Endothelial cell of umbilical vein (primary cell): ENCODE measurements at regions of chr10 and their contacts with region 1.

Region 1: GRCh38 chr10:48306265-48306869 is at the start of gene MAPK8:
- DNase-seq: peak; percentile 85
- H3K4me3 ChIP-seq: peak within 1 kb of the TSS; percentile 64 to 97 (median 80)
- H3K27ac ChIP-seq: peak within 1 kb of the TSS; percentile 76
- H3K4me1 ChIP-seq: peaks cover 29% of the 10 kb centered on the region
- H3K27me3 ChIP-seq: peaks cover 6% of the 10 kb centered on the region in 2 experiments
- CTCF ChIP-seq: no peak
- POLR2A ChIP-seq: peak; percentile 85
- total RNA-seq, gene MAPK8: 50.1 and 56.2 TPM in 2 replicates

Region 2: DNA sequence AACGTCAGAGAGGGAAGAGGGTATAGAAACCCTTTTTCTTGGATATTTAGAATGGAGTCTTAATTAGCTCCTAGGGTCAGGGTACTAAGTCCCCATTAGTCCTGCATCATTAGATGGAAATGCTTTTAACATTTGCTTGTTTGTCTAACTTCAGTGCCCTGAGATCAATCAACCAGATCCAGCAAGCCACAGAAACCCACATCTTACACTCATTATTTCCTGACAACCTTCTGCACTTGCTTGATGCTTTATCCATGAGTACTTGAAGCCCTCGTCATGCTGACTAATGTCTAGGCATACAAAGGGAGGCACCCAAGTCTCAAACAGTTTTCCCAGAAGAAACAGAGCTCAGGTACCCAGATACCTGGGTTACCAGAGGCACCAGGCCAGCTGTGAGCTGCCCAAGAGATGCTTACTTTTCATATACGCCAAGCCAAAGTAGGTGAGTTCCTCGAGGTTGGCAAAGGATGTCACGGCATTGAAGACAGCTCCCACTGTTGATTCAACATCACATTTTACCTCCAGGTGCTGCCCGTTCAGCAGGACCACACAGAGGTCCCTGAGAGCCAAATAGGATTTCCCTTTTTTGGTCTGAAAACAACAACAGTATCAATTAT is 74.6 kb before region 1 on chr10:
- CTCF ChIA-PET with region 1: no interaction called
- POLR2A ChIA-PET with region 1: no interaction called
- dilution Hi-C with region 1: no loop called
- intact Hi-C with region 1: no loop called
- DNase-seq: no peak
- H3K4me3 ChIP-seq: no peak overlapping the region
- H3K27ac ChIP-seq: no peak overlapping the region
- H3K4me1 ChIP-seq: no peaks in the 10 kb centered on the region
- H3K27me3 ChIP-seq: peaks cover 6 to 20% of the 10 kb centered on the region in 2 experiments
- CTCF ChIP-seq: no peak
- POLR2A ChIP-seq: no peak

Region 3: DNA sequence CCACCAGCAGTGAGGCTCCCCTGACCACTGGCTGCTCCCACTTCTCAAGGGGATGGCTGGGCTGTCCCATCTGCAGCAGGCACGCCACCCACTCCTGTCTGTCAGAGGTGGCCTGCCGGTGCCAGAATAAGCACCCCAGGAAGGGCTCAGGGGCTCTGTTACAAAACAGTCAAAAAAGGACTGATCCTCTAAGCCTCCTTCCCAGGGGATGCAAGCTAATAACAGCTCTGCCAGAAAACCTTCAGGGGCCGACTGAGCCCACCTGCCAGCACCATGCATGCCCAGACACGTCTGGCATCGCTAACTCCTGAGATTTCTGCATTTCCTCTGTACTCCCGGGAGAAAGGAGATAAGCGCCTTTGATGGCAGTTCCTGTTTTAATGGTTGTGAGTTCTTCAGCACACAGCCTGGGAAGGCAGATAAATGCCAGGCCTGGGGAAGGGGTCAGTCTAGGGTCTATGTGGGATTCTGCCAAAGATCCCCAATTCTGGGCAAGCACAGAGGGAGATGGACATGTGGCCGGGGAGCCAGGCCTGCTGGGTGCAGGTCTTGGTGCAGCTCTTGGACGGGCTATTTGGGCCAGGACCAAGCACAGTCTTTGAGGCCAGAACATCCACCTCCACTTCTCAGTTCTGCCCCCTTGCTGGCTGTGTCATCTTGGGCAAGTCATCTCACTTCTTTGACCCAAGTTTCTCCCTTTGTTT is 170.1 kb after region 1 on chr10:
- CTCF ChIA-PET with region 1: no interaction called
- POLR2A ChIA-PET with region 1: no interaction called
- dilution Hi-C with region 1: no loop called
- intact Hi-C with region 1: loop called (anchors 1 kb)
- DNase-seq: peak; percentile 71
- H3K4me3 ChIP-seq: no peak overlapping the region
- H3K27ac ChIP-seq: no peak overlapping the region
- H3K4me1 ChIP-seq: peaks cover 20% of the 10 kb centered on the region
- H3K27me3 ChIP-seq: no peaks in the 10 kb centered on the region
- CTCF ChIP-seq: no peak
- POLR2A ChIP-seq: no peak

Region 4: DNA sequence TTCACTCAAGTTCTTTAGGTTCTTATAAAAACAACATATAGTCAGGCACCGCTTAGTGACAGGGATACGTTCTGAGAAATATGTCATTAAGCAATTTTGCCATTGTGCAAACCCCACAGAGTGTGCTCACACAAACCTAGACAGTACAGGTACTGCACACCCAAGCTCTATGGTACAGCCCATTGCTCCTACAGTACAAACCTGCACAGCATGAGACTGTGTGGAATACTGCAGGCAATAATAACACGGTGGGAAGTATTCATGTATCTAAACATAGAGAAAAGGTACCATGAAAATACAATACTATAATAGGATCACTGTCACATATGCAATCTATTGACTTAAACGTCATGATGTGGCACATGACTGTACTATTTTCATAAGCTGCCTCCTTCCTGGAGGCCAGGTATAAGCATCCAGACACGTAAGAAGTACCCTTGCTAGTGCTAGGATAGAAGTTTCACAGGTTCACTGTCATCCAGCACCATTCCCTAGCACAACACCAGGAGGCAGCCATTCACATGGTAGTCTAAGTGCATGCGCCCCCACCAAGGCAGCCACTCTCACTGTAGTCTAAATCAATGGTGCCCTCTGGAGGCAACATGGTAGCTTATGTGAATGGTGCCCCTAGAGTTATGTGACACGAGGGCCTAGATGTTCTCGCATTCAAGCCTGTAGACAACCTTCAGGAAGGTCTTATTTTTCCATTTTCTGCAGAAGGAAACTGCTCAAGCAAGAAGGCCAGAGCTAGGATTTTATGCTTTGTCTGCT is 200.0 kb after region 1 on chr10:
- CTCF ChIA-PET with region 1: interaction called, 3 read pairs
- POLR2A ChIA-PET with region 1: no interaction called
- dilution Hi-C with region 1: no loop called
- intact Hi-C with region 1: loop called (anchors 1 kb)
- DNase-seq: peak; percentile 67
- H3K4me3 ChIP-seq: no peak overlapping the region
- H3K27ac ChIP-seq: no peak overlapping the region
- H3K4me1 ChIP-seq: peaks cover 19% of the 10 kb centered on the region
- H3K27me3 ChIP-seq: no peaks in the 10 kb centered on the region
- CTCF ChIP-seq: peak; percentile 36 to 53
- POLR2A ChIP-seq: no peak

Region 5: DNA sequence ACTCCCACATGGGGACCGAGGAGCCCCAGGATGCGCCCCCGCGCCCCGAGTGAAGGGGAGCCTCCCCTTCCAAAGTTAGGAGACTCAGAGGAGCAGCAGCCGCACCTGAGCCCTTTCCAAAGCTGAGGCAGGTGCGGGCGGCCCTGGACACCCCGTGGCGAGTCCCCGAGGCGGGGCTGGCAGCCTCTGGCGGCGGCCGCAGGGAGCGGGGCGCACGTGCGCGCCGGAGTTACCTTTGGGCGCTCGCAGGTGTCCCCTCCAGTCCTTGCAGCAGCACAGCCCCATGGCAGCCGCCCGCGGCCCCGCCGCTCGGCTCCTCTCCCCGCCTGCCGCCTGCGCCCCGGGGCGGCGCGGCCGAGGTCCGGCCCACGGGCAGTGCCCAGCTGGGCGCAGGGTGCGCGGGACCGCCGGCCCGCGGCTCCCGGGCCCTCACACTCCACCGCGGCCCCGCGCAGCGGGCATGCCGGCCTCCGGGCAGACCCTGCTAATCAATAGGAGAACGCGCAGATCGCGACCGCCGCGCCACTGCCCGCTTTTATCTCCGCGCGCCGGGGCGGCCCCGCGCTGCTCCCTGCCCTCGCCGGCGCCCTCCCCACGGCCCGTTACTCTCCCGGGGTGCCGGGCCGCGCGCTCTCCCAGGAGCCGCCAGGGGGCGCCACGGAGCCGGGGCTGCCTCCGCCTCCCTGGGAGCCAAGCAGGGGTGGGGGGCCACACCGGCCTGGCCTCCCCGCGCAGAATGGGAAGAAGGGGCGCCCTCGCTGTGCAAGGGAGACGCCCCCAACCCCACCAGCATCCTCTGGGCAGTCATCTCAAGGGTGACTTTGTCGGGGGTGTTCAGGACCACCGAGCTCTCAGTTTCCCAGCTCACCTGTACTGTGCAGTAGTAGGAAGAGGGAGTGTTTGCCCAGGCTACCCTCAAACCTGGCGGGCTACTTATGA is 217.7 kb after region 1 on chr10:
- CTCF ChIA-PET with region 1: no interaction called
- POLR2A ChIA-PET with region 1: no interaction called
- dilution Hi-C with region 1: no loop called
- intact Hi-C with region 1: loop called (anchors 5 kb)
- DNase-seq: no peak
- H3K4me3 ChIP-seq: peak overlapping the region in 2 of 3 experiments; percentile 30 to 54
- H3K27ac ChIP-seq: no peak overlapping the region
- H3K4me1 ChIP-seq: peaks cover 33% of the 10 kb centered on the region
- H3K27me3 ChIP-seq: no peaks in the 10 kb centered on the region
- CTCF ChIP-seq: peak; percentile 69 to 77
- POLR2A ChIP-seq: no peak